ENCODE measurements at regions of chr6 and their contacts with region 1.

Region 1: GRCh38 chr6:11496152-11497060 is 41.1 kb upstream of the TMEM170B start:
- DNase-seq: peak; percentile 84
- ATAC-seq: peak; percentile 95
- H3K4me3 ChIP-seq: no peak overlapping the region
- H3K27ac ChIP-seq: no peak overlapping the region
- H3K4me1 ChIP-seq: peaks cover 8% of the 10 kb centered on the region
- H3K27me3 ChIP-seq: no peaks in the 10 kb centered on the region
- CTCF ChIP-seq: peak; percentile 99
- POLR2A ChIP-seq: 0 out of 2 replicates have a peak, but pooled peaks have one; percentile 53
- RAD21 ChIP-seq: peak; percentile 98

Region 2: DNA sequence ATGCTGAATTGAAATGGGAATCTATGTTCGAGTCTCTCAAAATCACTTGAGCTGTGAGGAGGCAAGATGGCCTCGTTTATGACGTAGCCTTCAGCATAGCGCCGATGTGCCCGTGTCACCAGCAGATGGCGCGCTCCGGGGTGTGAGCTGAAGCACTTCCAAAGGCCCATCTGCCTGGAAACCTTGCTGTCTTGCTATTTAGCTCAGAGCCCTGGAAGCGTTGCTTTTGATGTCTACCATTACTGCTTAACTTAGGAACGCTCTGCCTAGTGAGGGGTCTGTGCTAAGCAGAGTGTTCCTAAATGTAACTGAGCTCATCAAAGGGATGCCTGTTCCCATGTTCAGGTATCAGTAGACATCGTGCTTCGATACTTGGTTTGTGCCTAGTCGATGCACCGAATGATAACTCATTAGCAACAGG is 541.8 kb before region 1 on chr6:
- CTCF ChIA-PET with region 1: no interaction called
- POLR2A ChIA-PET with region 1: no interaction called
- dilution Hi-C with region 1: no loop called
- in situ Hi-C with region 1: loop called (anchors 5 kb)
- intact Hi-C with region 1: loop called (anchors 1 kb)
- DNase-seq: peak; percentile 77
- ATAC-seq: peak; percentile 65
- H3K4me3 ChIP-seq: no peak overlapping the region
- H3K27ac ChIP-seq: no peak overlapping the region
- H3K4me1 ChIP-seq: peaks cover 3% of the 10 kb centered on the region; the same call in 1 of the 2 replicates
- H3K27me3 ChIP-seq: peaks cover 9% of the 10 kb centered on the region
- CTCF ChIP-seq: peak; percentile 81
- POLR2A ChIP-seq: no peak
- RAD21 ChIP-seq: peak; percentile 87

Region 3: DNA sequence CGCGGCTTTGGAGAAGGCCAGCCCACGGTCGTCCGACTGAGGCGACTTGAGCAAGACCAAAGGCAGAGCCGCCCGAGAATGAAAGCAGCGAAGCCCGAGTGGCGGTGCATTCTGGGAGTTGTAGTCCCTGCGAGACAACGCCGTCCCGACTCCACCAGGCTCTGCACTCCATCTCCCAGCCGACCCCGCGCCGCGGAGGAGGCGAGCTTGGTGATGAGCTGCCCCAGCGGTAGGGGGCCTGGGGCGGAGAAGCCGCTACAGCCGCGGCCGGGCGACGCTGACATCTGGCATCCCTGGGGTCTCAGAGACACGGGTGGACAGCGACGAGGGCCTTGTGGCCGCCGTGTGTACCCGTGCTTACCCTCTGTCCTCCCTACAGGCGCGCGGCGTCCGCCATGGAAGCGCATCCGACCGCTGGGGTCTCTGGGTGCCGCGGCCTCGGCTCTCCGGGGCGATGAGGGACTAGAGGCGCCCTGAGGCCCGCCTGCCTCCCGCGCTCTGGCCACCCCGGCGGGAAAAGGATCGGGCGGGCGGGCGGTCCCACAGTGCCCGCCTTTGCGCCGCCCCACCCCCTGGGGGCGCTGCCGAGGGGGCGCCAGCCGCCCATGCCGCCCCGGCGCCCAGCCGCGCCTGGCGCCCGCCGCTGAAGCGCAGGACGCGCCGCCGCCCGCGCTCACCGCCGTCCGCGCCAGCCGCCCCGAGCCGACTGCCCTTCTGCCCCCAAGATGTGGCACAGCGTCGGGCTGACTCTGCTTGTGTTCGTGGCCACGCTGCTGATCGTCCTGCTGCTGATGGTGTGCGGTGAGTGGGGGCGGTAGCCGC is 402.6 kb before region 1 on chr6 and contains the start of gene SMIM13:
- CTCF ChIA-PET with region 1: interaction called, 3 read pairs
- POLR2A ChIA-PET with region 1: no interaction called
- dilution Hi-C with region 1: no loop called
- in situ Hi-C with region 1: no loop called
- intact Hi-C with region 1: loop called (anchors 1 kb)
- DNase-seq: peak; percentile 98
- ATAC-seq: peak; percentile 96
- H3K4me3 ChIP-seq: peak within 1 kb of the TSS; percentile 70
- H3K27ac ChIP-seq: peak within 1 kb of the TSS; percentile 96
- H3K4me1 ChIP-seq: peaks cover 3% of the 10 kb centered on the region; the same call in 1 of the 2 replicates
- H3K27me3 ChIP-seq: no peaks in the 10 kb centered on the region
- CTCF ChIP-seq: peak; percentile 61
- POLR2A ChIP-seq: peak; percentile 82
- RAD21 ChIP-seq: peak; percentile 31; the same call in 1 of the 2 replicates
- total RNA-seq, gene SMIM13: 10.0 and 17.2 TPM in 2 replicates

Region 4: GRCh38 chr6:11172501-11173332 is 323.7 kb before region 1 on chr6:
- CTCF ChIA-PET with region 1: interaction called, 4 read pairs
- POLR2A ChIA-PET with region 1: no interaction called
- dilution Hi-C with region 1: no loop called
- in situ Hi-C with region 1: no loop called
- intact Hi-C with region 1: loop called (anchors 1 kb)
- DNase-seq: peak; percentile 27
- ATAC-seq: peak; percentile 62
- H3K4me3 ChIP-seq: no peak overlapping the region
- H3K27ac ChIP-seq: no peak overlapping the region
- H3K4me1 ChIP-seq: no peaks in the 10 kb centered on the region
- H3K27me3 ChIP-seq: no peaks in the 10 kb centered on the region
- CTCF ChIP-seq: peak; percentile 70
- POLR2A ChIP-seq: no peak
- RAD21 ChIP-seq: peak; percentile 73

Region 5: GRCh38 chr6:11270030-11271027 is 226.1 kb before region 1 on chr6:
- CTCF ChIA-PET with region 1: interaction called, 5 read pairs
- POLR2A ChIA-PET with region 1: no interaction called
- dilution Hi-C with region 1: no loop called
- in situ Hi-C with region 1: no loop called
- intact Hi-C with region 1: loop called (anchors 5 kb)
- DNase-seq: peak; percentile 10
- ATAC-seq: no peak
- H3K4me3 ChIP-seq: no peak overlapping the region
- H3K27ac ChIP-seq: peak overlapping the region; percentile 55; the same call in 1 of the 2 replicates
- H3K4me1 ChIP-seq: peaks cover 22% of the 10 kb centered on the region
- H3K27me3 ChIP-seq: no peaks in the 10 kb centered on the region
- CTCF ChIP-seq: no peak
- POLR2A ChIP-seq: no peak
- RAD21 ChIP-seq: no peak

Region 6: DNA sequence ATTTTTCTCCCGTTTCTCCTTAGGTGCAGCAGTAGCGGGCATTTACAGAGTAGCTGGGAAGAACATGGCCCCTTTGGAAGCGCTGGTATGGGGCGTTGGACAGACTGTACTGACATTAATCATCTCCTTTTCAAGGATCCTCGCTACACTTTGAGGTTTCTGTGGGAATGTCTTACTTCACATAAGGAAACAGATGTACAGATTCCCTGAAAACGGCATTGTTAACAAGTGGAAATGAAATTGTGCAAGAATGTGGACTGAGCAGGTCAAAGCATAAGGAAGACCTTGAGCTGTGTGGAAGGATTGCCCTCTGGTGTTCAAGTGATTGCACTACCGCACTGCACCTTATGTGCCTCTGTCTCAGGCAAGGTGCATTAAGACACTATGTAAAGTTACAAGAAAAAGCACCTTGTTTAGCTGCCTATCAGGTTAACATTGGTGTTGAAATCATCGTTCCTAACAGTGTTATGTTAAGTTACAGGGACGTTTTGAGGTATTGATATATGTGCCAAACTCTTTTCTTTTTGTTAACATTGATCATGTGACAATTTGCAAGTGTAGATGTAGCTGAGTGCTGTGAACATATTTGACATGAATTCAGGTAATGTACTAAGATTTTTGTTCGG is 79.1 kb after region 1 on chr6:
- CTCF ChIA-PET with region 1: interaction called, 5 read pairs
- POLR2A ChIA-PET with region 1: no interaction called
- dilution Hi-C with region 1: no loop called
- in situ Hi-C with region 1: no loop called
- intact Hi-C with region 1: loop called (anchors 2 kb)
- DNase-seq: peak; percentile 84
- ATAC-seq: peak; percentile 100
- H3K4me3 ChIP-seq: no peak overlapping the region
- H3K27ac ChIP-seq: no peak overlapping the region
- H3K4me1 ChIP-seq: no peaks in the 10 kb centered on the region
- H3K27me3 ChIP-seq: no peaks in the 10 kb centered on the region
- CTCF ChIP-seq: peak; percentile 90
- POLR2A ChIP-seq: no peak
- RAD21 ChIP-seq: peak; percentile 94